ENCODE measurements at regions of chr11 and their contacts with region 1.

Region 1: GRCh38 chr11:66344550-66345315 is at the start of gene BRMS1:
- DNase-seq: peak; percentile 89 to 98 (median 97)
- ATAC-seq: peak; percentile 81
- H3K4me3 ChIP-seq: peak within 1 kb of the TSS; percentile 79
- H3K4me3 Mint-ChIP-seq: peak within 1 kb of the TSS; percentile 96
- H3K27ac ChIP-seq: peak within 1 kb of the TSS; percentile 75 to 87
- H3K27ac Mint-ChIP-seq: peak within 1 kb of the TSS; percentile 94
- H3K4me1 ChIP-seq: peaks cover 36% of the 10 kb centered on the region
- H3K4me1 Mint-ChIP-seq: peaks cover 54% of the 10 kb centered on the region
- H3K27me3 ChIP-seq: no peaks in the 10 kb centered on the region
- H3K27me3 Mint-ChIP-seq: peaks cover 2% of the 10 kb centered on the region
- CTCF ChIP-seq: no peak
- total RNA-seq, gene BRMS1: 66.7 to 68.0 TPM

Region 2: DNA sequence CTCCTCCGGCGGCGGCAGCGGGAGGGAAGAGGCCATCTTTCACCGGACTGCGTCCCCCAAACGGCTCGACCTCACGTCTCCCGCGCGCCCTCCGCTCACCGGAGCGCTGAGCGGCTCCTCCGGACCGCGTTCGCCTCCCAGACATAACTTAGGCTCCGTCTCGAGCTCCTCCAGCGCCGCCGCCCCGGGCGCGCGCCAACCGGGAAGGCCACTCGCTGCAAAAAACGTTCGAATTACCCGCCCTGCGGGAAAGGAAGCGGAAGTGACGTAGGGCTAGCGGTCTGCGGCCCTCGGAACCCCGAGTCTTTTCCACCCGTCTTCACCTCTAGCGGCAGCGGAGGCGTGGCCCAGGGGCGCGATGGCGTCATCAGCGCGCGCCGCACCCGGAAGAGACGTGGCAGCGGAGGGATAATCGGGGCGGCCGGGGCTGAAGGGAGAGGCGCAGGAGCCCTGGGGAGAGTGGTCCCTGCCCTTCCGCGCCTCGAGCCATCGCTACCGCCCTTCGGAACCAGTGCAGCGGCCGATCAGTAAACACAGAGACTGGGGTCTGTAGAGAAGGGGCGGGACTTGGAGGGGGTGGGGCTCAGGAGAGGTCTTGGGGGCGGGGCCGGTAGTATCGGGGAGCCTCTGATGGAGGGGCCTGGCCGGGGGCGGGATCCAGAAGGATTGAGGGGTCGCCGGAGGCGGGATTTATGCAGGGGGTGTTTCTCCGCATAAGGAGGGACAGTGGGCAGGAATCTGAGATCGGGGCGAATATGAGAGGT is 1260.7 kb before region 1 on chr11 and contains the starts of genes CDCA5 and ZFPL1:
- CTCF ChIA-PET with region 1: no interaction called
- POLR2A ChIA-PET with region 1: no interaction called
- intact Hi-C with region 1: loop called in 1 of 2 experiments (anchors 10 kb)
- DNase-seq: peak; percentile 94 to 98 (median 96)
- ATAC-seq: peak; percentile 88
- H3K4me3 ChIP-seq: peak within 1 kb of the TSS; percentile 71 to 87
- H3K4me3 Mint-ChIP-seq: peak within 1 kb of the TSS; percentile 93
- H3K27ac ChIP-seq: peak within 1 kb of the TSS; percentile 90 to 97
- H3K27ac Mint-ChIP-seq: peak within 1 kb of the TSS; percentile 99
- H3K4me1 ChIP-seq: peaks cover 17% of the 10 kb centered on the region
- H3K4me1 Mint-ChIP-seq: peaks cover 27% of the 10 kb centered on the region
- H3K27me3 ChIP-seq: no peaks in the 10 kb centered on the region
- H3K27me3 Mint-ChIP-seq: no peaks in the 10 kb centered on the region
- CTCF ChIP-seq: no peak
- total RNA-seq, gene CDCA5: 0.76 to 1.2 TPM
- total RNA-seq, gene ZFPL1: 52.3 to 52.6 TPM

Region 3: GRCh38 chr11:66242095-66242765 is 102.5 kb before region 1 on chr11:
- CTCF ChIA-PET with region 1: no interaction called
- POLR2A ChIA-PET with region 1: no interaction called
- intact Hi-C with region 1: no loop called
- DNase-seq: no peak
- ATAC-seq: no peak
- H3K4me3 ChIP-seq: no peak overlapping the region
- H3K4me3 Mint-ChIP-seq: no peak overlapping the region
- H3K27ac ChIP-seq: no peak overlapping the region
- H3K27ac Mint-ChIP-seq: no peak overlapping the region
- H3K4me1 ChIP-seq: no peaks in the 10 kb centered on the region
- H3K4me1 Mint-ChIP-seq: no peaks in the 10 kb centered on the region
- H3K27me3 ChIP-seq: no peaks in the 10 kb centered on the region
- H3K27me3 Mint-ChIP-seq: no peaks in the 10 kb centered on the region
- CTCF ChIP-seq: no peak

Region 4: GRCh38 chr11:66317723-66318599 is 26.8 kb before region 1 on chr11:
- CTCF ChIA-PET with region 1: interaction called, 59 read pairs
- POLR2A ChIA-PET with region 1: interaction called, 45 read pairs
- intact Hi-C with region 1: no loop called
- DNase-seq: peak; percentile 67 to 98 (median 86)
- ATAC-seq: peak; percentile 85
- H3K4me3 ChIP-seq: peak overlapping the region; percentile 33 to 74
- H3K4me3 Mint-ChIP-seq: peak overlapping the region; percentile 87
- H3K27ac ChIP-seq: peak overlapping the region; percentile 92 to 98
- H3K27ac Mint-ChIP-seq: peak overlapping the region; percentile 99
- H3K4me1 ChIP-seq: peaks cover 38% of the 10 kb centered on the region
- H3K4me1 Mint-ChIP-seq: peaks cover 55% of the 10 kb centered on the region
- H3K27me3 ChIP-seq: no peaks in the 10 kb centered on the region
- H3K27me3 Mint-ChIP-seq: no peaks in the 10 kb centered on the region
- CTCF ChIP-seq: no peak

Region 5: DNA sequence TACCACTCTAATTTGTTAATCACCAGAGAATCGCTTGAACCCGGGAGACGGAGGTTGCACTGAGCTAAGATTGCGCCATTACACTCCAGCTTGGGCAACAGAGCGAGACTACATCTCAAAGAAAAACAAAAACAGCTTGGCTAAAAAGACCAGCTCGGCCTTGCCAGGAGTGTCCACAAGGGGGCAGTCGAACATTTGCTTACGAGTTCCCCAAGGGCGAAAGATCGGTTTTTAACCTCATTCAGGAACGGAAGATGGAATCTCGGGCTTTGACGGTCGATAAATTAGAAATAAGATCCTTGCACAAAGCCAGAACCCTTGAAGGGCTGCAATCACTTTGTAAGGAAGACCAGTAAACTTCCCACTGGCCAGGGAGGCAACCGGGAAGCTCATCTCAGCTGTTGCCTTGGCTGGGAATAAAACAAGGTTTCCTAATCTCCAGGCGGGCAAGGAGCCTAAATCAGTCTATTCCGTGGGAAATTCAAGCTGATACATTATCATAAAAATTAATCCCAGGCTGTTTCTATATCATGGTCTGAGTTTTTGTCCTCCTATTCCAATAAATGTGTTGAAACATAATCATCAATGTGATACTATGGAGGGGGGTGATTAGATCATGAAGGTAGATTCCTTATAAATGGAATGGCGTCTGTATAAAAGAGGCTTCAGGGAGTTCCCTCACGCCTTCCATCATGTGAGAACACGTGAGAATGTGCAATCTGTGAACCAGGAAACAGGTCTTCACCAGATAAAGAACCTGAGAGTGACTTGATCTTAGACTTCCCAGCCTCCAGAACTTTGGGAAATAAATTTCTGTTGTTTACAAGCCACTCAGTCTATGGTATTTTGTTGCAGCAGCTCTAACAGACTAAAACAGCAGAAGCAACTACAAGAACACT is 41.7 kb after region 1 on chr11:
- CTCF ChIA-PET with region 1: interaction called, 15 read pairs
- POLR2A ChIA-PET with region 1: interaction called, 5 read pairs
- intact Hi-C with region 1: loop called (anchors 5 kb)
- DNase-seq: peak; percentile 67 to 90 (median 83)
- ATAC-seq: peak; percentile 75
- H3K4me3 ChIP-seq: no peak overlapping the region
- H3K4me3 Mint-ChIP-seq: peak overlapping the region; percentile 18
- H3K27ac ChIP-seq: no peak overlapping the region
- H3K27ac Mint-ChIP-seq: no peak overlapping the region
- H3K4me1 ChIP-seq: peaks cover 5% of the 10 kb centered on the region
- H3K4me1 Mint-ChIP-seq: peaks cover 8% of the 10 kb centered on the region
- H3K27me3 ChIP-seq: no peaks in the 10 kb centered on the region
- H3K27me3 Mint-ChIP-seq: no peaks in the 10 kb centered on the region
- CTCF ChIP-seq: peak; percentile 77

Region 6: GRCh38 chr11:66842896-66843775 is 498.4 kb after region 1 on chr11 and contains the start of gene RCE1:
- CTCF ChIA-PET with region 1: no interaction called
- POLR2A ChIA-PET with region 1: no interaction called
- intact Hi-C with region 1: loop called in 1 of 2 experiments (anchors 1 kb)
- DNase-seq: peak; percentile 85 to 96 (median 89)
- ATAC-seq: peak; percentile 88
- H3K4me3 ChIP-seq: peak within 1 kb of the TSS; percentile 68 to 91
- H3K4me3 Mint-ChIP-seq: peak within 1 kb of the TSS; percentile 86
- H3K27ac ChIP-seq: peak within 1 kb of the TSS; percentile 99 to 100
- H3K27ac Mint-ChIP-seq: peak within 1 kb of the TSS; percentile 93
- H3K4me1 ChIP-seq: peaks cover 47% of the 10 kb centered on the region
- H3K4me1 Mint-ChIP-seq: peaks cover 51% of the 10 kb centered on the region
- H3K27me3 ChIP-seq: no peaks in the 10 kb centered on the region
- H3K27me3 Mint-ChIP-seq: no peaks in the 10 kb centered on the region
- CTCF ChIP-seq: no peak
- total RNA-seq, gene RCE1: 68.9 to 72.2 TPM

Measured in CD8-positive, alpha-beta T cell (primary cell).